ENCODE measurements at regions of chr20 and their contacts with region 1.

Region 1: DNA sequence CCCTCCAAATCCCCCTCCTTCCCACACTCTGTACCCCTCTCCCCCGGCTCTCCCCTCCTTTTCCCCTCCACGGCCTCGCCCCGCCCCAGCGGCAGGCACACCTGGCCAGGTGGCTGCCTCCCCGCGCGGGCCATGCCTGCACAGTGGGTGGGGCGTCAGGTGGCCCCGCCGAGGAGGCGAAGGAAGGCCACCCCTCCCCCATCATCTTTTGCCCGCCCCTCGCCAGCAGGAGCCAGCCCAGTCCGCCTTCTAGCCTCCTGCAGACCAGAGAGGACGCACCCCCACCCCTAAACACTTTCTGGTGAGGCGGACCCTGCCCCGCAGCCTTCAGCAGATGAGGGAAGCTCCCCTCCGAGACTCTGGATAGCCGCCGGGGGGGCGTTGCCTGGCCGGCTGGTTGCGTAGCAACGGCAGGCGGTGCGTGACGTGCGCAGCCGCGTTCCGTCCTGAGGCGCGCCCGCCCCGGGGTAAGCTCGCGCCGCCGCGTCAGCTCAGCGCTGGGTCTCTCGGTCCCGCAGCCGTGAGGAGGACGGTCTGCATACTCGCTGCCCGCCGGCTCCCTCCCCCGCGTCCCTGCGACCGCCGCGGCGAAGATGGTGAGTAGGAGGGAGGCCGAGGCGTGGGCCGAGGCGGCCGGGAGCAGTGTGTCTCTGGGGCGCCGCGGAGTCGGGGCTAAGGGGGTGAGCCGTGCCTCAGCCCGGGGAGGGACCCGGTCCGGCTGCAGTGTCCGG is at the start of gene DSTN:
- H3K4me3 ChIP-seq: peak within 1 kb of the TSS; percentile 98
- H3K27ac ChIP-seq: peak within 1 kb of the TSS; percentile 99
- H3K4me1 ChIP-seq: peaks cover 8% of the 10 kb centered on the region
- CTCF ChIP-seq: no peak

Region 2: GRCh38 chr20:17536944-17537444 is 32.8 kb before region 1 on chr20:
- CTCF ChIA-PET with region 1: interaction called, 3 read pairs
- POLR2A ChIA-PET with region 1: interaction called, 19 read pairs
- H3K4me3 ChIP-seq: no peak overlapping the region
- H3K27ac ChIP-seq: no peak overlapping the region
- H3K4me1 ChIP-seq: peaks cover 6% of the 10 kb centered on the region
- CTCF ChIP-seq: peak; percentile 92

Region 3: GRCh38 chr20:17558154-17558940 is 11.4 kb before region 1 on chr20:
- CTCF ChIA-PET with region 1: interaction called, 5 read pairs
- POLR2A ChIA-PET with region 1: interaction called, 24 read pairs
- H3K4me3 ChIP-seq: no peak overlapping the region
- H3K27ac ChIP-seq: peak overlapping the region; percentile 38
- H3K4me1 ChIP-seq: peaks cover 16% of the 10 kb centered on the region
- CTCF ChIP-seq: no peak

Region 4: GRCh38 chr20:17584689-17585088 is 14.9 kb after region 1 on chr20:
- CTCF ChIA-PET with region 1: interaction called, 6 read pairs
- POLR2A ChIA-PET with region 1: interaction called, 22 read pairs
- H3K4me3 ChIP-seq: no peak overlapping the region
- H3K27ac ChIP-seq: no peak overlapping the region
- H3K4me1 ChIP-seq: peaks cover 5% of the 10 kb centered on the region; the same call in 1 of the 2 replicates
- CTCF ChIP-seq: no peak

Measured in HEK293 (cell line).